Aorta (tissue), 5 donors: ENCODE measurements at regions of chr2 and their contacts with region 1.

Region 1: GRCh38 chr2:102033031-102033749 is 41.4 kb downstream of the IL1R2 start:
- DNase-seq: peak in 1 of 2 donors; percentile 91
- ATAC-seq: peak; percentile 58
- H3K4me3 ChIP-seq: no peak overlapping the region
- H3K27ac ChIP-seq: peak overlapping the region in 1 of 2 donors; percentile 14
- H3K4me1 ChIP-seq: peaks cover 4 to 10% of the 10 kb centered on the region in 2 donors
- H3K27me3 ChIP-seq: no peaks in the 10 kb centered on the region

Region 2: DNA sequence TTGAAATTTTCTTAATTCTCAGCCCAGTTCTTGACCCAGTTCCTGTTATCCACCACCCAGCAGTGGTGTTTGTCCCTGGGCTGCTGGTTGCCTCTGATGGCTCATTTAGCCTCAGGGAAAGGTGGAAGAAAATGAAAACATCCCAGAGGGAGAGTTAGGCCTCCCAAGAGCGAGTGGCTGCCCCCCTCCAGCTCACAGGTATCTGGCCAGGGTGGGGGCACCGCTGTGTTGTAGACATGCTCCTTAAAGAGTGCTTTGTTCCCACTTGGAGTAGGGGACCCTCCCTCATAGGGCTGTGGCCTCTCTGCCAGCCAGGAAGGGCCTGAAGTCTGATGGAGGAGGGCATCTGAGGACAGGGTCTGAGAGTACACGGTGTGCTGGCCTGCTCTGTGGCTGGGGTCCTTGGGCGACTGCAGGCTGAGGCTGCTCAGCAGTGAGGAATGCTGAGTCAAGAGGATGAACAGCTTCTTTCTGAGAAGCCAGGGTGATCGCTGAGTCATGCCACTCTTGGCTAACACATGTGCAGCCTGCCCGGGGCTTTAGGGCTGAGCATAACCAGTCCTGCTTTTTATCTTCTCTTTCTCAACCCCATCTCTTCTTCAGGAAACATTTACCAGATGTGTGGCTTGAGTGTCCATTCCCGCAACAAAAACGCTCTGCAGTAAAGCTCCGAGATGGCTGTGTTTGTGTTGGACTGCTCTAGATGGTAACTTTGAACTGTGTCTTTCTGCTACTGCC is 30.9 kb after region 1 on chr2:
- intact Hi-C with region 1: loop called in 1 of 2 experiments (anchors 1 kb)
- DNase-seq: peak; percentile 93 to 95
- ATAC-seq: peak; percentile 94
- H3K4me3 ChIP-seq: no peak overlapping the region
- H3K27ac ChIP-seq: peak overlapping the region; percentile 95 to 100
- H3K4me1 ChIP-seq: peaks cover 2% of the 10 kb centered on the region in 2 donors
- H3K27me3 ChIP-seq: no peaks in the 10 kb centered on the region

Region 3: DNA sequence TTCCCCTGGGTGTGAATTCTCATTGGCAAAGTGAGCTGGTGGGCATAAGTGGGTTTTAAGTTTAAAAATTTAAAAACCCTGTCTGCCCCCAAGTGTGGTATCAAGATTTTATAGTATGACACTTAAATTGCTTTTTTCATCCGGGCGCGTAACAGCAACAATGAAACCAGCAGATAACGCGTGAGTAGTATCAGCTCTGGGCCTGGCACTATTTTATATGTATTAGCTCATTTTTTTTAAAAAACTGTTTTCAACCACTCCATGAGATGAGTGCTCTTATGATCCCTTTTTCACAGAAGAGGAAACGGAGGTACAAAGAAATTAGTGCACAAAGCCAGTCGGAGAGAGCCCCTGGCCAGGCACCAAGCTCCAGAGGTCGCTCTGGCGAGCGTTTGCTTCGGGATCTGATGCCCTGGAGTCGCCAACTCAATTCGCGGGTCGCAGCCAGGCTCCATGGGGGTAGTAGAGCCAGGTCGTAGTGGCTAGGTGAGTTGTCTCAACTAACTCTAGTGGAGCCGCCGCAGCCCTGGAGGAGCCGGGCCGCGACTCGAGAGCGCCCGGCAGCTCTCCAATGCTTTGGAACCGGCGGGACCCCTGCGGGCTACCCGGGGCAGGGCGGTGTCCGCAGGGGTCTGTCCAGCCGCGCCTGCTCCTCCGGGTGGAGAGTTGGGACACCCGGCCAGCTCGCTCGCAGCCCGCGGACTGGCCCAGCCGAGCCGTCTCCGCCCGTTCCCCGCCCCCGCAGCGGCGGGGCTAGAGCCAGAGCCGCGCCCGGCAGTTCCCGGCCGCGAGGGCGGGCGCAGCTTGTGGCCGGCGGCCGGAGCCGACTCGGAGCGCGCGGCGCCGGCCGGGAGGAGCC is 109.0 kb after region 1 on chr2 and contains the start of gene IL1R1:
- intact Hi-C with region 1: loop called in 1 of 2 experiments (anchors 5 kb)
- DNase-seq: peak; percentile 92 to 95
- ATAC-seq: peak; percentile 93
- H3K4me3 ChIP-seq: peak within 1 kb of the TSS; percentile 40 to 72
- H3K27ac ChIP-seq: peak within 1 kb of the TSS; percentile 58 to 82
- H3K4me1 ChIP-seq: no peaks in the 10 kb centered on the region
- H3K27me3 ChIP-seq: no peaks in the 10 kb centered on the region
- total RNA-seq, gene IL1R1: 135 to 155 TPM